GM12878 (cell line): ENCODE measurements at regions of chr6 and their contacts with region 1.

Region 1: GRCh38 chr6:227074-227782 is 65.1 kb upstream of the DUSP22 start:
- DNase-seq: peak; percentile 95
- ATAC-seq: peak; percentile 36
- H3K4me3 ChIP-seq: no peak overlapping the region
- H3K27ac ChIP-seq: peak overlapping the region; percentile 94
- H3K4me1 ChIP-seq: peaks cover 96% of the 10 kb centered on the region
- H3K27me3 ChIP-seq: no peaks in the 10 kb centered on the region
- CTCF ChIP-seq: peak; percentile 32 to 73 (median 60); a peak in 5 of 6 replicates
- EP300 ChIP-seq: peak in 1 of 2 experiments; percentile 75; a peak in 2 of 4 replicates
- POLR2A ChIP-seq: peak; percentile 50; the same call in 1 of the 2 replicates
- RAD21 ChIP-seq: peak; percentile 88

Region 2: DNA sequence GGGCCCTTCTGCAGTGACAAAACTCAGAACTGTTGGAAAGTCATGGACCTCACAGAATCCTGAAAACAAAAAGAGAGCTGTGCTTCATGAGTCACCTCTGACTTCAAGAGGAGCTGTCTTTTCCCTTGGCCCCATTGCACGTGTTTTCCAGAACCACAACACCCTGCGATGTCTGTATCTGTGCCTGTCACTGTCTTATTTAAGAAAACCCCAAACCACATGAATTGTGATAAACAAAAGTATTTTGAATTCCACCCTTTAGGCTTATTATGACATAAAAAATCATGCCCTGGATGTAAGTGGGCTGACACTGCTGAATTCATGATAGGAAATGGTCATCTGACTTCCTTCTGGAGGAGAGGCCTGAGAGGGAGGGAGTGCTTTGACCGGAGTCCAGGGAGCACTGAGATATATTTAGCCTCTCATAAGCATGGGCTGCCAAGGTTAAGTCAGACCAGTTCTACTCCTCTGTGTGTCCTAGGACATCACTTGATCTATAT is 31.3 kb before region 1 on chr6:
- CTCF ChIA-PET with region 1: interaction called, 460 read pairs
- POLR2A ChIA-PET with region 1: interaction called, 139 read pairs
- RAD21 ChIA-PET with region 1: interaction called, 519 read pairs
- SMC1A ChIA-PET with region 1: interaction called, 748 read pairs
- in situ Hi-C with region 1: no loop called
- intact Hi-C with region 1: no loop called
- DNase-seq: no peak
- ATAC-seq: no peak
- H3K4me3 ChIP-seq: no peak overlapping the region
- H3K27ac ChIP-seq: no peak overlapping the region
- H3K4me1 ChIP-seq: peaks cover 48% of the 10 kb centered on the region
- H3K27me3 ChIP-seq: no peaks in the 10 kb centered on the region
- CTCF ChIP-seq: no peak
- EP300 ChIP-seq: no peak
- POLR2A ChIP-seq: no peak
- RAD21 ChIP-seq: no peak

Region 3: DNA sequence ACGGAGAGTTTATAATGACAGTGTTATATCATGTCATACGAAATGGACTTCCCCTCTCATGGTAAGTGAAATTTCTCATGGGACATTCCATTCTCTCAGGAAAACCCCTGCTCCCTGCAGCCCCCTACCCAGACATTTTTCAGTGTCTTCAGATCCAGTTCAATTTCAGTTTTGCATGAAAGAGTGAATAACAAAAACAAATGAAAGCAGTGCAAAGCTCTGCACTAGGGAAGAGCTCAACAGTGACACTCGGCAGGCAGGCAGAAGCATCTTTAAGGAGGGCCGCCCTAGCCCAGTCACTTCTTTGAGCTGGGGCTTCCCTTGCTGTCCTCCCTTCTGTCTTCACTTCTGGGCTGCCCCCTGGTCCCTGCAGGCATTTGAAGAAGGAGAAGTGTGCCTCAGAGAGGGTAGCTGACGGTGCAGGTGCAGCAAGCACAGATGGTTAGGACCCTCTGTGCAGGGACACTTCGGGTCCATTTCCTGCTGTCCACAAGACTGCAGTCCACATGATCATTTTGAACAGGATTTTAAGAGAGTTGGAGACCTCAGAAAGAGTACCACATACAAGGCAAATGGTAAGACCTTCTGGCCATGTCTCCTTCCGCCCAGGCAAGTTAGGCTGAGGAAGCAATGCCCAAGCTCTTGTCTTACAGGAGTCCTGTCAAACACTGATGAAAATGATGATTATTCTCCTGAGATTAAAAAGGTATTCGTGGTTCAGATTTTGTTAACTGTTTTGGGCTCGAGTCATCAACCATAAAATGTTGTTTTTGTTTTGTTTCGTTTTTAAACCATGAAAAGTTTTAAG is 59.7 kb after region 1 on chr6:
- CTCF ChIA-PET with region 1: interaction called, 15 read pairs
- POLR2A ChIA-PET with region 1: interaction called, 39 read pairs
- RAD21 ChIA-PET with region 1: interaction called, 49 read pairs
- SMC1A ChIA-PET with region 1: interaction called, 150 read pairs
- in situ Hi-C with region 1: no loop called
- intact Hi-C with region 1: loop called (anchors 1 kb)
- DNase-seq: no peak
- ATAC-seq: peak; percentile 48
- H3K4me3 ChIP-seq: peak overlapping the region; percentile 2; the same call in 1 of the 2 replicates
- H3K27ac ChIP-seq: peak overlapping the region; percentile 53
- H3K4me1 ChIP-seq: peaks cover 54% of the 10 kb centered on the region
- H3K27me3 ChIP-seq: no peaks in the 10 kb centered on the region
- CTCF ChIP-seq: no peak
- EP300 ChIP-seq: 0 out of 4 replicates have a peak, but pooled peaks have one; percentile 42 to 61
- POLR2A ChIP-seq: no peak
- RAD21 ChIP-seq: 0 out of 2 replicates have a peak, but pooled peaks have one; percentile 7

Region 4: DNA sequence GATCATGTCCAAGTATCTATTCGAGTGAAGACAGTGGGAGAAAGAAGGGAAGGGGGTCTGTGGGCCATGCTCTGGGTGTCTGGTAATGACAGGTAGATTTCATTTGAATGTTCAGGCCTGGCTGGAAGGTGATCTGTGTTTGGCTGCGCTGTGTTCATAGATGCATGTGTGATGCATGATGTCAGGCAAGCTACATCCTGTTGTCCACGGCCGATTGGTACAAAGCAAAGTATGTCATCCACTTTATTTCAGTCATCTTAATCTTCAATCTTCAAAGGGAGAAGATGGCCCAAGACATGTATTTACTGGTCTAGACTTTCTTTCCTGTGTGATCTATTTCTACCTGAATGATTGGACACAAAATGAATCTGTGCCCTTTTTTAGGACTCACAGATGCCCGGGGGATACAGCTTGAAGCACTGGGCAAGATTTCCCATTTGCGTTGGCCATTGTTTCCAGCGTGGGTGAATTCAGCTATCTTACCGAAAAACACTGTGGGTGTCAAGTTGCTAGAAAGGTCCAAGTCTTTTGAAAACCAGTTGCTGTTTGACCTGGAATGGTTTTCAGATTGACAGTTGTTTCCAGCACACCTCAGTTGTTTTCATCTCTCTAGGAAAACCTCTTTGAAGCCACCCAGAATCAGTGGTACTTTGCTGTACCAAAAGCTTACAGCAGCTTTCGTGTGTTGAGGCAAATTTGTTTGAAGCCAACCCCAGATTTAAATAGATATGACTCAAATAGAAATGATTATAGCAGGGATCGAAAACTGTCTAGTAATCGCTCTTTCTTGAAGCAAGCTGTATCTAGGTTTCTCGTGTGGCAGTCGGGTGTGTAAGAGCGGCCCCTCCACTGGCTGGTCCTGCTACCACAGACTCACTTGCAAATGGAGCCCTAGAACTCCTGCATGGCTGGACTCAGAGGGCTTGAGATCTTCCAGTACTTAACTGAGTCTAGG is 92.2 kb after region 1 on chr6:
- CTCF ChIA-PET with region 1: interaction called, 7 read pairs
- POLR2A ChIA-PET with region 1: interaction called, 6 read pairs
- RAD21 ChIA-PET with region 1: interaction called, 131 read pairs
- SMC1A ChIA-PET with region 1: interaction called, 49 read pairs
- in situ Hi-C with region 1: no loop called
- intact Hi-C with region 1: loop called (anchors 1 kb)
- DNase-seq: peak; percentile 95
- ATAC-seq: peak; percentile 50
- H3K4me3 ChIP-seq: peak overlapping the region; percentile 57
- H3K27ac ChIP-seq: peak overlapping the region; percentile 92
- H3K4me1 ChIP-seq: peaks cover 98% of the 10 kb centered on the region
- H3K27me3 ChIP-seq: no peaks in the 10 kb centered on the region
- CTCF ChIP-seq: no peak
- EP300 ChIP-seq: peak; percentile 72 to 85; a peak in 3 of 4 replicates
- POLR2A ChIP-seq: no peak
- RAD21 ChIP-seq: no peak

Region 5: DNA sequence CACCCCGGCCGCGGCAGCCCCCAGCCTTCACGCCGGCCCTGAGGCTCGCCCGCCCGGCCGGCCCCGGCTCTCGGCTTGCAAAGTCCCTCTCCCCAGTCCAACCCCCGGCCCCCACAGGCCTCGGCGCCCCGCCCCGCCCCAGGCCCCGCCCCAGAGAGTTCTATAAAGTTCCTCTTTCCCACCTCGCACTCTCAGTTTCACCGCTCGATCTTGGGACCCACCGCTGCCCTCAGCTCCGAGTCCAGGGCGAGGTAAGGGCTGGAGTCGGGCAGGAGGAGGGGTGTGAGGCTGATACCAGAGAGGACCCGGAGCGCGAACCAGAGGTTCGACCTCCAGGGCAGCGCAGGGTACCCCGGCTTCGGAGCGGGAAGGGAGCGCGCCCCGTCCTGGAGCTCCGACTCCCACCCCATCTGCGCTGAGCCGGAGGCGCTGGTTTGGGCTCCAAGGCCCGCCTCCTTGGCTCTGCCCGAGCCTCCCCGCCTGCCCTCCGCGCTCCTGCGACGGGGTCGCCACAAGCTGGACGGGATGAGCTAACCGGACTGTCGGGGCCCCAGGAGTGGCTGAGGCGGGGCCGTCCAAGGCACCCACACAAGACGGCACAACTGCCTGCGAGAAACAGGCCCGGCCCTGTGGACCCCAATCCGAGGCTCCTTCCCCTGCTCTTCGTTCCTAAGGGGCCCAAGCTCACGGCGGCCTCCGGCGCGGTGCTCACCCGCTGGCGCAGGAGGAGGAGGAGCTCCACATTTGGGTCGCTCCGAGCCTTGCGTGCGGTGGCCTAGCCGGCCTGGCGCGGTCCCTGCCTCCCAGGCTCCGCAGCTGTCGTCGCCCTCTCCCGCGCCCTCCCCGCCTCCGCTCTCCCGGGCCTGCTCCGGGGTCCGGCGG is 164.6 kb after region 1 on chr6 and contains the start of gene IRF4:
- CTCF ChIA-PET with region 1: interaction called, 14 read pairs
- POLR2A ChIA-PET with region 1: interaction called, 9 read pairs
- RAD21 ChIA-PET with region 1: interaction called, 43 read pairs
- SMC1A ChIA-PET with region 1: interaction called, 185 read pairs
- in situ Hi-C with region 1: no loop called
- intact Hi-C with region 1: loop called (anchors 2 kb)
- DNase-seq: no peak
- ATAC-seq: peak; percentile 63
- H3K4me3 ChIP-seq: peak within 1 kb of the TSS; percentile 95
- H3K27ac ChIP-seq: peak within 1 kb of the TSS; percentile 97
- H3K4me1 ChIP-seq: peaks cover 33% of the 10 kb centered on the region
- H3K27me3 ChIP-seq: no peaks in the 10 kb centered on the region
- CTCF ChIP-seq: no peak
- EP300 ChIP-seq: no peak
- POLR2A ChIP-seq: peak; percentile 77
- RAD21 ChIP-seq: peak; percentile 25; the same call in 1 of the 2 replicates
- polyA plus RNA-seq, gene IRF4: 50.0 to 98.9 TPM

Region 6: DNA sequence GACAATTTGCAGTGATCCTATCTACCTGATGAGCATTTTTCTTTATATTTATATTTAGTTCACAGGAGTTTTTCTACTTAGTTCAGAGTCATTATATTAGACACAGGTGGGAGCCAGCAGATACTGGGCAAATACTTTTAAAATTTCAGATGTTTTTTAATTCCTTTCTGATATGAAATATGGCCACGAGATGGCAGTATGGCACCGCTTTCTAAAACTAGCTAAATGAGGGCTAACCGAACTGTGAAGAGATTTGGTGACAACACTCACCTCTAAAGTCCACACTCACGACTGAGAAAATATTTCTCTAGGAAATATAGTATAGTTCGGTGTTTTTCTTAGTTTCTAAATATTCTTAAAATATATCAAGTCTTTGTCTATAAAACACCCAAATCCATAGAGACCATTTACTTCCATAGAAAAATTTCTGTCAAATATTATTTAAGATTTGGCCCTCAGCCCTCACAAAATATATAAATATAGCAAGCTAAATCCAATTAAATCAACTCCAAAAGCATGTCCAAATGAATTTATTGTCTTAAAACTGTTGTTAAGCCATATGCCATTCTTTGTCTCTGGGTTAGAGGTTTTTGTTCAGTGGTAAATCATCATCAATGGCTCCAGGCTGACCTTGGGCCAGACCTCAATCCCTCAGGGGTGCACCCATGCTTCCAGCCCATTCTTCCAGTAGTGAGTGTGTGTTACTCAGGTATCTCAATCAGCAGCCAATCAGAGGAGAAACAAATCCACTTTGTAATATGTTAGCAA is 366.1 kb after region 1 on chr6:
- CTCF ChIA-PET with region 1: interaction called, 31 read pairs
- POLR2A ChIA-PET with region 1: interaction called, 3 read pairs
- RAD21 ChIA-PET with region 1: interaction called, 30 read pairs
- SMC1A ChIA-PET with region 1: interaction called, 35 read pairs
- in situ Hi-C with region 1: no loop called
- intact Hi-C with region 1: loop called (anchors 5 kb)
- DNase-seq: peak; percentile 13
- ATAC-seq: peak; percentile 85
- H3K4me3 ChIP-seq: no peak overlapping the region
- H3K27ac ChIP-seq: no peak overlapping the region
- H3K4me1 ChIP-seq: no peaks in the 10 kb centered on the region
- H3K27me3 ChIP-seq: no peaks in the 10 kb centered on the region
- CTCF ChIP-seq: peak; percentile 38 to 67 (median 42); a peak in 5 of 6 replicates
- EP300 ChIP-seq: no peak
- POLR2A ChIP-seq: no peak
- RAD21 ChIP-seq: peak; percentile 81

Region 7: GRCh38 chr6:665403-666267 is 438.4 kb after region 1 on chr6:
- CTCF ChIA-PET with region 1: no interaction called
- POLR2A ChIA-PET with region 1: no interaction called
- RAD21 ChIA-PET with region 1: no interaction called
- SMC1A ChIA-PET with region 1: no interaction called
- in situ Hi-C with region 1: no loop called
- intact Hi-C with region 1: no loop called
- DNase-seq: no peak
- ATAC-seq: no peak
- H3K4me3 ChIP-seq: no peak overlapping the region
- H3K27ac ChIP-seq: no peak overlapping the region
- H3K4me1 ChIP-seq: no peaks in the 10 kb centered on the region
- H3K27me3 ChIP-seq: no peaks in the 10 kb centered on the region
- CTCF ChIP-seq: no peak
- EP300 ChIP-seq: no peak
- POLR2A ChIP-seq: no peak
- RAD21 ChIP-seq: no peak

Region 8: GRCh38 chr6:1182722-1183521 is 955.7 kb after region 1 on chr6:
- CTCF ChIA-PET with region 1: no interaction called
- POLR2A ChIA-PET with region 1: no interaction called
- RAD21 ChIA-PET with region 1: no interaction called
- SMC1A ChIA-PET with region 1: no interaction called
- in situ Hi-C with region 1: no loop called
- intact Hi-C with region 1: no loop called
- DNase-seq: no peak
- ATAC-seq: no peak
- H3K4me3 ChIP-seq: no peak overlapping the region
- H3K27ac ChIP-seq: no peak overlapping the region
- H3K4me1 ChIP-seq: no peaks in the 10 kb centered on the region
- H3K27me3 ChIP-seq: peaks cover 0 to 2% of the 10 kb centered on the region in 2 experiments; a peak in 2 of 4 replicates
- CTCF ChIP-seq: no peak
- EP300 ChIP-seq: no peak
- POLR2A ChIP-seq: no peak
- RAD21 ChIP-seq: no peak